ENCODE measurements at regions of chr16 and their contacts with region 1.

Region 1: GRCh38 chr16:3150346-3151218 is 15.8 kb downstream of the ZNF213 start:
- DNase-seq: no peak
- H3K4me3 ChIP-seq: peak overlapping the region; percentile 87
- CTCF ChIP-seq: no peak

Region 2: DNA sequence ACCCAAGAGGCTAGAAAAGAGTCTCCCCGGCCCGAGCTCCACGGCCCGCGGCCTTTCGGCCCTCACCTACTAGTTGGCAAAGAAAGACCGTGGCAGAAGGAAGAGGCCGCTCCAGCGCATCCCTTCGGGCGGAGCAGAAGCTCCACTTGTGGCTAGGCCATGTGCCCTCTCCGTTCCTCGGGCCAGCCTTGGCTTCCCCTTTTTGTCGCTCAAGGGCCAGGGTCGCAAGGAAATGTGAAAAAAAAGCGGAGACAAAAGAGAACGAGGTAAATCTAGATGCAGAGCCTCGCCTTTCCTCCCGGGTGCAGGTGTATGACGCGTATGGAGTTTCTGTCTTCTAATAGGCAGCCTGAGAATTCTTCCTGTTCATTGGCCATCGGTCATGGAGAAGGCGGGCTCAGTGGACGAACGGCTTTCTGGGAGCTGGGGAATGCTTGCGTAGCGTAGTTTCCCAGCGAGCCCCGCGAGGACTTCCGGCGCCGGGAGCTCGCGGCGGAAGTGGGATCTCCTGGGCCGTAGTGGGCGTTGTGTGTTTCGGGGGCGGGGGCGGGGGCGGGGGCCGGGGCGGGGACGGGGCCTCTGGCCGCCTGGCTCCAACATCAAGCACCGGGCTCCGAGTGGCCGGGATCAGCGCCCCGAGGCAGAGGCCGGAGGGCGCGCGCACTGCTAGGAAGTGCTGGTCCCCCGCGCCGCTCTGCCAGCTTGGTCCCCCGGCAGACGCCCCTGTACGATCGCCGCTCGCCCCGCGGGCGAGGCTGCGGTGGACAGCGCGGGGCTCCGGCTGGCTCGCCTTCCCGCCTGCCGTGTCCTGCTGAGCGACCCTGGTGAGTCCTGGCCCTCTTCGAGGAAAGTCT is 15.8 kb before region 1 on chr16 and contains the start of gene ZNF213:
- CTCF ChIA-PET with region 1: interaction called, 206 read pairs
- POLR2A ChIA-PET with region 1: interaction called, 10 read pairs
- DNase-seq: peak; percentile 87
- H3K4me3 ChIP-seq: peak within 1 kb of the TSS; percentile 95
- CTCF ChIP-seq: no peak

Region 3: GRCh38 chr16:3161136-3162018 is 10.8 kb after region 1 on chr16:
- CTCF ChIA-PET with region 1: interaction called, 13 read pairs
- POLR2A ChIA-PET with region 1: interaction called, 4 read pairs
- DNase-seq: no peak
- H3K4me3 ChIP-seq: no peak overlapping the region
- CTCF ChIP-seq: no peak

Region 4: GRCh38 chr16:3173892-3174617 is 23.5 kb after region 1 on chr16:
- CTCF ChIA-PET with region 1: interaction called, 13 read pairs
- POLR2A ChIA-PET with region 1: no interaction called
- DNase-seq: no peak
- H3K4me3 ChIP-seq: peak overlapping the region; percentile 23; the same call in 1 of the 2 replicates
- CTCF ChIP-seq: peak; percentile 37